ENCODE measurements at regions of chr9 and their contacts with region 1.

Region 1: GRCh38 chr9:21395778-21396717 is 10.8 kb upstream of the IFNA2 start:
- DNase-seq: peak; percentile 64
- ATAC-seq: peak; percentile 69

Region 2: DNA sequence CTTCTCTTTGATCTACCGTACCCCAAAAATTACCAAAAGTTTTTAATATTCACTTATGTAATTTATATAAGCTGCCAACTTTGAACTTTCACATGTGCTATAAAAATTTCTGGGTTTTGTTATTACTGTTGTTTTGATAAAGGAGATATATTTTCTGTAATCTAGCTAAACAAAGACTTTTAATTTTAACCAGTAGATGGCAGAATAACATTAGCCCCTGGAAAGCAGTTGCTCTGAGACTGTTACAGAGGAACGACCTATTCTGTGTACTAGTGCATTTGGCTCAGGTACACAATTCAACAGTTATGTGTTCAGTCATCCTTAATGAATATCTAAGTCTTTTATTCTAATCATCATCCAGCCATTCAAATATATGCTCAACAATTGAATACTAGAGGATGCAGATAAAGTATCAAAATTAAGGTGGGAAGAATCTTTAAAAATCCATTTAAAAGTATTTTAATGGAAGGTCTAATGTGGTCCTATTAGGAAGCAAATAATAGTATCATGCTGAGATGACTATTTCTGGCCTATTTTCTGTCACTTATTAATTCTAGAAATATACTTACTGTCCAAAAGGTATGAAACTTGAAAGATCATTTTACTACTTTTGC is 69.4 kb before region 1 on chr9:
- intact Hi-C with region 1: loop called (anchors 5 kb)
- DNase-seq: no peak
- ATAC-seq: peak; percentile 77

Measured in left ventricle myocardium superior (tissue), 1 donor.